MCF 10A (cell line): ENCODE measurements at regions of chr4 and their contacts with region 1.

Region 1: GRCh38 chr4:155953151-155954114 is at the start of gene CTSO:
- DNase-seq: peak; percentile 85
- H3K4me3 Mint-ChIP-seq: peak within 1 kb of the TSS; percentile 99
- H3K27ac Mint-ChIP-seq: peak within 1 kb of the TSS; percentile 99
- H3K4me1 Mint-ChIP-seq: peaks cover 8% of the 10 kb centered on the region
- H3K27me3 Mint-ChIP-seq: no peaks in the 10 kb centered on the region
- CTCF ChIP-seq: peak; percentile 38
- total RNA-seq, gene CTSO: 2.3 and 5.2 TPM in 2 replicates

Region 2: GRCh38 chr4:155403886-155404285 is 549.5 kb before region 1 on chr4:
- CTCF ChIA-PET with region 1: interaction called, 22 read pairs
- POLR2A ChIA-PET with region 1: interaction called, 9 read pairs
- intact Hi-C with region 1: loop called (anchors 1 kb)
- DNase-seq: peak; percentile 61
- H3K4me3 Mint-ChIP-seq: no peak overlapping the region
- H3K27ac Mint-ChIP-seq: no peak overlapping the region
- H3K4me1 Mint-ChIP-seq: no peaks in the 10 kb centered on the region
- H3K27me3 Mint-ChIP-seq: no peaks in the 10 kb centered on the region
- CTCF ChIP-seq: peak; percentile 56

Region 3: GRCh38 chr4:155442267-155443105 is 510.9 kb before region 1 on chr4:
- CTCF ChIA-PET with region 1: interaction called, 16 read pairs
- POLR2A ChIA-PET with region 1: interaction called, 5 read pairs
- intact Hi-C with region 1: loop called (anchors 1 kb)
- DNase-seq: peak; percentile 81
- H3K4me3 Mint-ChIP-seq: peak overlapping the region; percentile 64
- H3K27ac Mint-ChIP-seq: peak overlapping the region; percentile 55
- H3K4me1 Mint-ChIP-seq: peaks cover 13% of the 10 kb centered on the region
- H3K27me3 Mint-ChIP-seq: no peaks in the 10 kb centered on the region
- CTCF ChIP-seq: peak; percentile 94

Region 4: GRCh38 chr4:155787113-155787710 is 166.2 kb before region 1 on chr4:
- CTCF ChIA-PET with region 1: interaction called, 15 read pairs
- POLR2A ChIA-PET with region 1: no interaction called
- intact Hi-C with region 1: no loop called
- DNase-seq: peak; percentile 73
- H3K4me3 Mint-ChIP-seq: no peak overlapping the region
- H3K27ac Mint-ChIP-seq: no peak overlapping the region
- H3K4me1 Mint-ChIP-seq: peaks cover 5% of the 10 kb centered on the region
- H3K27me3 Mint-ChIP-seq: no peaks in the 10 kb centered on the region
- CTCF ChIP-seq: peak; percentile 74

Region 5: GRCh38 chr4:155809835-155810234 is 143.6 kb before region 1 on chr4:
- CTCF ChIA-PET with region 1: interaction called, 139 read pairs
- POLR2A ChIA-PET with region 1: interaction called, 45 read pairs
- intact Hi-C with region 1: loop called (anchors 1 kb)
- DNase-seq: peak; percentile 85
- H3K4me3 Mint-ChIP-seq: no peak overlapping the region
- H3K27ac Mint-ChIP-seq: no peak overlapping the region
- H3K4me1 Mint-ChIP-seq: peaks cover 8% of the 10 kb centered on the region
- H3K27me3 Mint-ChIP-seq: no peaks in the 10 kb centered on the region
- CTCF ChIP-seq: peak; percentile 50

Region 6: GRCh38 chr4:155819066-155819465 is 134.4 kb before region 1 on chr4:
- CTCF ChIA-PET with region 1: interaction called, 10 read pairs
- POLR2A ChIA-PET with region 1: interaction called, 8 read pairs
- intact Hi-C with region 1: no loop called
- DNase-seq: peak; percentile 65
- H3K4me3 Mint-ChIP-seq: no peak overlapping the region
- H3K27ac Mint-ChIP-seq: no peak overlapping the region
- H3K4me1 Mint-ChIP-seq: peaks cover 8% of the 10 kb centered on the region
- H3K27me3 Mint-ChIP-seq: no peaks in the 10 kb centered on the region
- CTCF ChIP-seq: no peak